CD4-positive, alpha-beta memory T cell (primary cell): ENCODE measurements at regions of chr4 and their contacts with region 1.

Region 1: GRCh38 chr4:147096667-147097604 is 151.3 kb upstream of the TTC29 start:
- DNase-seq: peak in 4 of 5 donors; percentile 38 to 48 (median 40)
- H3K4me3 ChIP-seq: no peak overlapping the region
- H3K4me3 Mint-ChIP-seq: no peak overlapping the region
- H3K27ac ChIP-seq: no peak overlapping the region
- H3K27ac Mint-ChIP-seq: no peak overlapping the region
- H3K4me1 ChIP-seq: no peaks in the 10 kb centered on the region
- H3K4me1 Mint-ChIP-seq: peaks cover 0 to 2% (median 0%) of the 10 kb centered on the region in 4 donors
- H3K27me3 ChIP-seq: no peaks in the 10 kb centered on the region
- H3K27me3 Mint-ChIP-seq: peaks cover 11 to 12% of the 10 kb centered on the region in 2 donors

Region 2: DNA sequence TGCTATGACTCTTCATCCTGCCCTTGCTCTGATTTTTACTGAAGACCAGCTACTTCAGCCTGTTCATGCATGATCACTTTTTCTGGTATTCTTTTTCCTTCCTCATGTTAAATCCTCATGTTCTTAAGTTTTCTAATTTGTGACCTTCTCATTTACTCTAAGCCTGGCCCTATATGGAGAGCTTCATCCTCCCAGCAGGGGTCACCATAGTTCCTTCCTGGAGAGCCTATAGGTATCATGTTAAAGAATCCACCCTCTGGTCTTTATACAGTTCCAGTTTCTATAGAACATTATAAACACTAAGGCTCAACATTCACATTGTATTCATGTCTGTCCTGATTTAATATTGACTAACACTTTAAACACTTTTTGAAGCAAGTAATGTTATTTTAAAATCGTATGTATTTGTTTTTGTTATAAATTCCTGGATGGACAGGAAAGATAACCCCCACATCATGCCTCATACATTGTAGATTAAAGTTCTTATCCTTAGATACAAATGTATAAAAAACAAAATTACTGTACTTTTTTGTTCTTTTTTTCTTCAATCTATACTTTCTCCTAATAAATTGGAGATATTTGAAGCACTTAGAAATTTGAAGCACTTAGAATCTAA is 1862.7 kb before region 1 on chr4:
- CTCF ChIA-PET with region 1: no interaction called
- POLR2A ChIA-PET with region 1: no interaction called
- intact Hi-C with region 1: loop called (anchors 5 kb)
- DNase-seq: peak; percentile 31 to 55 (median 43)
- H3K4me3 ChIP-seq: no peak overlapping the region
- H3K4me3 Mint-ChIP-seq: no peak overlapping the region
- H3K27ac ChIP-seq: no peak overlapping the region
- H3K27ac Mint-ChIP-seq: no peak overlapping the region
- H3K4me1 ChIP-seq: no peaks in the 10 kb centered on the region
- H3K4me1 Mint-ChIP-seq: no peaks in the 10 kb centered on the region
- H3K27me3 ChIP-seq: no peaks in the 10 kb centered on the region
- H3K27me3 Mint-ChIP-seq: peaks cover 0 to 10% of the 10 kb centered on the region in 2 donors

Region 3: GRCh38 chr4:145956288-145956890 is 1140.5 kb before region 1 on chr4:
- CTCF ChIA-PET with region 1: interaction called, 5 read pairs
- POLR2A ChIA-PET with region 1: no interaction called
- intact Hi-C with region 1: loop called (anchors 2 kb)
- DNase-seq: peak; percentile 24 to 50 (median 33)
- H3K4me3 ChIP-seq: no peak overlapping the region
- H3K4me3 Mint-ChIP-seq: no peak overlapping the region
- H3K27ac ChIP-seq: no peak overlapping the region
- H3K27ac Mint-ChIP-seq: peak overlapping the region in 1 of 7 donors; percentile 57
- H3K4me1 ChIP-seq: no peaks in the 10 kb centered on the region
- H3K4me1 Mint-ChIP-seq: no peaks in the 10 kb centered on the region
- H3K27me3 ChIP-seq: no peaks in the 10 kb centered on the region
- H3K27me3 Mint-ChIP-seq: peaks cover 6 to 8% of the 10 kb centered on the region in 2 donors

Region 4: GRCh38 chr4:146342600-146343192 is 754.2 kb before region 1 on chr4:
- CTCF ChIA-PET with region 1: interaction called, 26 read pairs
- POLR2A ChIA-PET with region 1: no interaction called
- intact Hi-C with region 1: loop called (anchors 1 kb)
- DNase-seq: peak in 4 of 5 donors; percentile 13 to 41 (median 34)
- H3K4me3 ChIP-seq: no peak overlapping the region
- H3K4me3 Mint-ChIP-seq: no peak overlapping the region
- H3K27ac ChIP-seq: no peak overlapping the region
- H3K27ac Mint-ChIP-seq: peak overlapping the region in 1 of 7 donors; percentile 53
- H3K4me1 ChIP-seq: no peaks in the 10 kb centered on the region
- H3K4me1 Mint-ChIP-seq: peaks cover 0 to 4% (median 1%) of the 10 kb centered on the region in 4 donors
- H3K27me3 ChIP-seq: no peaks in the 10 kb centered on the region
- H3K27me3 Mint-ChIP-seq: no peaks in the 10 kb centered on the region

Region 5: DNA sequence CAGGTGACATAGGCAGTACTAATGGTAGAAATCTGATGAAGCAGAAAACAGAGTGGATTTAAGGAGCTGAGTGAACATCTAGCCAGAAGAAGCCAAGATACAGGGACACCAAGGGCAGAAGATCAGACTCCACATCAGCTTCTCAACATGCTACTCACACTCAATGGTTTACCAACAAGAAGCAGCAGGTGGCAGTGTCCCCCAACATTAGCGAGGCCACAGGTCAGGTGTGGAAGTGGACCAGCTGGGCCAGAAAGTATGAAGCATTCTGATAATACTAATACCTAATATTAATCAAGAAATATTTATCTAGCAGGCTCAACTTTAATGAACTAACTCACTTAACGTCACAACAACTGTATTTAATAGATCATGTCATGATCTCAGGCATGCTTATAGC is 77.9 kb before region 1 on chr4:
- CTCF ChIA-PET with region 1: interaction called, 65 read pairs
- POLR2A ChIA-PET with region 1: no interaction called
- intact Hi-C with region 1: loop called (anchors 1 kb)
- DNase-seq: peak in 4 of 5 donors; percentile 31 to 42 (median 38)
- H3K4me3 ChIP-seq: no peak overlapping the region
- H3K4me3 Mint-ChIP-seq: no peak overlapping the region
- H3K27ac ChIP-seq: no peak overlapping the region
- H3K27ac Mint-ChIP-seq: no peak overlapping the region
- H3K4me1 ChIP-seq: no peaks in the 10 kb centered on the region
- H3K4me1 Mint-ChIP-seq: no peaks in the 10 kb centered on the region
- H3K27me3 ChIP-seq: no peaks in the 10 kb centered on the region
- H3K27me3 Mint-ChIP-seq: peaks cover 5 to 6% of the 10 kb centered on the region in 2 donors

Region 6: DNA sequence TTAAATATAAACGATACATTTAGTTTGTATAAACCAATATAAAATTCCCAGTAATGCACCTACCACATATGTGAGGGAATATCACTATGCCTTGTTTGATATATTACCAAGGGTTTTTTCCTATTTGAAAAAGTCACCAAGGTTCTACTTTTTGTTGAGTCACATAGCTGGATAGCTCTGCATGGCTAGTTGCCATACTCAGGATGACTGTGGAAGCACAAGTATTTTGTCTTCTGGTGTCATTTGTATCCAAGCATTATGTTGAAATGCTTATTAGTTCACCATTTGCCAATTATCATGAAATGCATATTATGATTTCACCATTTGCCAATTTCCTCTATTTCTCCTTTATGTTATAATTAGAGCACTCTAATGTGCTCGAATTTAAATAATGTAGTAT is 11.5 kb after region 1 on chr4:
- CTCF ChIA-PET with region 1: interaction called, 25 read pairs
- POLR2A ChIA-PET with region 1: no interaction called
- intact Hi-C with region 1: no loop called
- DNase-seq: no peak
- H3K4me3 ChIP-seq: no peak overlapping the region
- H3K4me3 Mint-ChIP-seq: no peak overlapping the region
- H3K27ac ChIP-seq: no peak overlapping the region
- H3K27ac Mint-ChIP-seq: no peak overlapping the region
- H3K4me1 ChIP-seq: no peaks in the 10 kb centered on the region
- H3K4me1 Mint-ChIP-seq: no peaks in the 10 kb centered on the region
- H3K27me3 ChIP-seq: no peaks in the 10 kb centered on the region
- H3K27me3 Mint-ChIP-seq: peaks cover 4 to 7% of the 10 kb centered on the region in 2 donors